Cardiac septum (tissue), 1 donor: ENCODE measurements at regions of chr7 and their contacts with region 1.

Region 1: GRCh38 chr7:150368096-150368883 is at the start of gene REPIN1:
- DNase-seq: peak; percentile 96
- total RNA-seq, gene REPIN1: 85.5 TPM

Region 2: GRCh38 chr7:150404805-150405583 is 36.7 kb after region 1 on chr7:
- intact Hi-C with region 1: loop called (anchors 1 kb)
- DNase-seq: peak; percentile 93